ENCODE measurements at regions of chr17 and their contacts with region 1.

Region 1: GRCh38 chr17:46832945-46833839 is 14.7 kb upstream of the WNT3 start:
- DNase-seq: peak in 1 of 2 donors; percentile 25
- ATAC-seq: peak in 6 of 8 donors; percentile 69 to 89 (median 75)
- H3K4me3 ChIP-seq: no peak overlapping the region
- H3K27ac ChIP-seq: no peak overlapping the region
- H3K4me1 ChIP-seq: peaks cover 0 to 6% (median 0%) of the 10 kb centered on the region in 9 donors
- H3K27me3 ChIP-seq: peaks cover 0 to 11% (median 0%) of the 10 kb centered on the region in 7 donors
- CTCF ChIP-seq: no peak

Region 2: GRCh38 chr17:45990886-45991285 is 842.3 kb before region 1 on chr17:
- intact Hi-C with region 1: loop called in 1 of 10 experiments (anchors 10 kb)
- DNase-seq: no peak
- ATAC-seq: no peak
- H3K4me3 ChIP-seq: no peak overlapping the region
- H3K27ac ChIP-seq: no peak overlapping the region
- H3K4me1 ChIP-seq: no peaks in the 10 kb centered on the region
- H3K27me3 ChIP-seq: no peaks in the 10 kb centered on the region
- CTCF ChIP-seq: no peak

Region 3: GRCh38 chr17:46193626-46194392 is 639.4 kb before region 1 on chr17:
- intact Hi-C with region 1: no loop called
- DNase-seq: peak; percentile 96 to 97
- ATAC-seq: peak; percentile 93 to 98 (median 94)
- H3K4me3 ChIP-seq: peak overlapping the region; percentile 69 to 96 (median 86)
- H3K27ac ChIP-seq: peak overlapping the region; percentile 98 to 100 (median 100)
- H3K4me1 ChIP-seq: peaks cover 14 to 56% (median 42%) of the 10 kb centered on the region in 9 donors
- H3K27me3 ChIP-seq: no peaks in the 10 kb centered on the region
- CTCF ChIP-seq: peak in 8 of 9 donors; percentile 4 to 66 (median 25)

Region 4: GRCh38 chr17:46782250-46782953 is 50.8 kb before region 1 on chr17:
- intact Hi-C with region 1: loop called in 1 of 10 experiments (anchors 10 kb)
- DNase-seq: no peak
- ATAC-seq: peak in 5 of 8 donors; percentile 39 to 60 (median 42)
- H3K4me3 ChIP-seq: no peak overlapping the region
- H3K27ac ChIP-seq: no peak overlapping the region
- H3K4me1 ChIP-seq: no peaks in the 10 kb centered on the region
- H3K27me3 ChIP-seq: peaks cover 0 to 17% (median 0%) of the 10 kb centered on the region in 7 donors
- CTCF ChIP-seq: peak in 8 of 9 donors; percentile 18 to 61 (median 52)

Region 5: GRCh38 chr17:46795379-46795952 is 37.7 kb before region 1 on chr17:
- intact Hi-C with region 1: loop called in 1 of 10 experiments (anchors 5 kb)
- DNase-seq: no peak
- ATAC-seq: no peak
- H3K4me3 ChIP-seq: no peak overlapping the region
- H3K27ac ChIP-seq: no peak overlapping the region
- H3K4me1 ChIP-seq: no peaks in the 10 kb centered on the region
- H3K27me3 ChIP-seq: peaks cover 0 to 57% (median 52%) of the 10 kb centered on the region in 7 donors
- CTCF ChIP-seq: no peak

Measured in heart right ventricle (tissue), 16 donors.